Activated CD4-positive, alpha-beta T cell treated with anti-CD3 and anti-CD28 coated beads, Interleukin-2, amount 10 ng/mL, durations not matched to agents 24 days and 14 days (primary cell): ENCODE measurements at regions of chrX and their contacts with region 1.

Region 1: DNA sequence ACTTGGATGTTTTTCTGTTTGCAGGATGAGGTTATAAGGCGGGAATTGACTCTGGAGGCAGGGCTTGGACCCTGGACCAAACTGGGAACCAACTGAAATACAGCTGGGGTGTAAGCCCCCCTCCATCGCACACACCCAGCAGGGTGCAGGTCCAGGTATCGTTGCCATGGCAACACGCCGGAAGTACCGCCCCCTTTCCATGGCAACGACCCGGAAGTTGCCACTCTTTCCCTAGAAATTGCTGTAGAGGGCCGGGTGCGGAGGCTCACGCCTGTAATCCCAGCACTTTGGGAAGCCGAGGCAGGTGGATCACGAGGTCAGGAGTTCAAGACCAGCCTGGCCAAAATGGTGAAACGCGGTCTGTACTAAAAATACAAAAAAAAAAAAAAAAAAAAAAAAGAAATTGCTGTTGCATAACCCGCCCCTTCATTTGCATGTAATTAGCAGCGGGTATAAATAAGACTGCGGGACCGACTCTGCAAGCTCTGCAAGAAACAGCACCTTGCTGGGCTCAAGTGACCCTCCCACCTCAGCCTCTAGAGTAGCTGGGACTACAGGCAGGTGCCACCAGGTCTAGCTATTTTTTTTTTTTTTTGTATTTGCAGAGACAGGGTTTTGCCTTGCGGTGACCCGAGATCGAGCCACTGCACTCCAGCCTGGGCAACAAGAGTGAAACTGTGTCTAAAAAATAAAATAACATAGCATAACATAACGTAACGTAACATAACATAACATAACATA is 139.6 kb downstream of the CRLF2 start:
- DNase-seq: no peak
- H3K4me3 Mint-ChIP-seq: no peak overlapping the region
- H3K27ac Mint-ChIP-seq: no peak overlapping the region
- H3K4me1 Mint-ChIP-seq: peaks cover 6% of the 10 kb centered on the region
- H3K27me3 Mint-ChIP-seq: peaks cover 4% of the 10 kb centered on the region

Region 2: DNA sequence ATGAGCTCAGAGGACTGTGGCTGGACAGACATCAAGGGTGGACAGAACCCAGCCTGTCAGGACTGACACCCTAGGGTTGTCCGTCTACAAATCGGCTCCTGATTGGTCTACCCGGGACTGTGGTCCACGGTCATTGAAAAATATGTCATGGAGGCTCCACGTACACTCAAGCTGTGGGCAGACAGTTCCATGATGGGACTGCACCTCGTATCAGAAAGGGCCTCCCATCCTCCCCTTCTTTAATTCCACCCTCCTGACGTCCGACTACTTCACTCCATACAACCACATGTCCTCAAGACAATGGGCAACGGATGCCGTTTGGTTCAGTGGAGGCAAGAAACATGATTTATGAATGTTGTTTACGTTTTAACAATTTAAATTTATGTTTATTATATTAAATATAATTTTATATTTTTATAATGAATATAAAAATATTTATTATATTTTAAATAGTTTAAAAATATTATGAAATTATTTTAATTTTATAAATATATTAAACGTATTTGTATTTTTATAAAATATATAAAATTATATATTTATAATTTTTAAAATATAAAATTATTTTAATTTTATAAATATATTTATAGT is 500.2 kb before region 1 on chrX:
- intact Hi-C with region 1: loop called (anchors 5 kb)
- DNase-seq: no peak
- H3K4me3 Mint-ChIP-seq: no peak overlapping the region
- H3K27ac Mint-ChIP-seq: no peak overlapping the region
- H3K4me1 Mint-ChIP-seq: no peaks in the 10 kb centered on the region
- H3K27me3 Mint-ChIP-seq: no peaks in the 10 kb centered on the region

Region 3: DNA sequence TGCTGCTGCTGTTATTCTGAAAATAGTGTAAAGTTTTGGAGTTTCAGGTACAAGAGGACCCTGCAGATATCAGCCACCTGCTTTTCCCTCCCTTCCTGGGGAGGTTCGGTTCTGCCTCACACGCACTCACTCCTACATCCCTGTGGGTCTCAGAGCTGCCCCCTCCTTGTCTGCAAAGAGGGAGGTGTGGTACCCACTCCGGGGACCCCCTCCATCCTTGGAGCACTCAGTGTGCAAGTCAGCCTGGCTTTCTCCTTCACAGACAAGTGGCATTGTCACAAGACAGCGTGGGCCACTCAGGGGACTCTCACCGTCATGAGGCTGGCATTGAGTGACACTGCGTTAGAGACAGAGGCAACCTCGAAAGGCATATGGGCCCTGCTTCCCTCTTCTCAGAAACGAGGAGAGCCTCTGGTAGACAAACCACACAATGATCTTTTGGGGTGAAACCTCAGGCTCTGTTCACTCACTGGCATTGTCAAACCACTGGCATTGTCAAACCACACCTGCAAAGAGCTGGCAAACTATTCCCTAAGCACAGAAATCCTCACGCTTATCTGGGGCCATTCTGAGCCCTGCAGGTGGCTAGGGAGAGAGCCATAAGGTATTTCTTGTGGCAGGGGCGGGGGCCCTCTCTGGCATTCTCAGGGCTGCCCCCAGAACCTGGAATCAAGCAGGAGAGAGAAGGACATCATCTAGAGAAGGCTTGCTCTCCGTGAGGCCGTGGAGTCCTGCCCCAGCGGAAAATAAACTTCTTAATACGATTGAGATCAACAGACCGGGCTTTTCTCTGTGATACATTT is 157.2 kb before region 1 on chrX:
- intact Hi-C with region 1: loop called (anchors 10 kb)
- DNase-seq: peak; percentile 78
- H3K4me3 Mint-ChIP-seq: no peak overlapping the region
- H3K27ac Mint-ChIP-seq: no peak overlapping the region
- H3K4me1 Mint-ChIP-seq: no peaks in the 10 kb centered on the region
- H3K27me3 Mint-ChIP-seq: no peaks in the 10 kb centered on the region

Region 4: DNA sequence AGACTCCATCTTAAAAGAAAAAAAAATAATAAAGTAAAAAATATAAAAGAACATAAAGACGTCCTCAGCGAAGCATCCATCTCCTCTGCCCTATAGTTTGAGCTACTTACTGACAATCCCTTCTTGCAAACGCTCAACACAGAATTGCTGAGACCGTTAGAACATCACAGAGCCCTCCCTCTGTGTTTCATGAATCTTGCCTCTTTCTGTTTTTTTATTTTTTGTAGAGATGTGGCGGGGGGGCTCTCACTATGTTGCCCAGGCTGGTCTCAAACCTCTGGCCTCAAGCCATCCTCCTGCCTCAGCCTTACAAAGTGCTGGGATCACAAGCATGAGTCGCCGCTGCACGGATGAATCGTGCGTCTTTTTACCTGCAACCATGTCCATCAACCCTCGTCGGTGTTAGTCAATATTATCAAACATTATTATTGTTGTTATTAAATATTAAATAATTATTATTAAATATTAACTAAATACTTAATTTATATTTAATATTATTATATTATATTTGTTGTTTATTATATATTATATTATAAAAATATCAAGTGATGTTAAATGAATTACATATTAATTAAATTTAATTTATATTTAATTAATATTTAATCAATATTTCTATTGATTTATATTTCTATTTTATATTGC is 61.0 kb before region 1 on chrX:
- intact Hi-C with region 1: loop called (anchors 5 kb)
- DNase-seq: no peak
- H3K4me3 Mint-ChIP-seq: no peak overlapping the region
- H3K27ac Mint-ChIP-seq: no peak overlapping the region
- H3K4me1 Mint-ChIP-seq: no peaks in the 10 kb centered on the region
- H3K27me3 Mint-ChIP-seq: no peaks in the 10 kb centered on the region

Region 5: GRCh38 chrX:1178580-1179057 is 105.8 kb after region 1 on chrX:
- intact Hi-C with region 1: loop called (anchors 5 kb)
- DNase-seq: peak; percentile 71
- H3K4me3 Mint-ChIP-seq: no peak overlapping the region
- H3K27ac Mint-ChIP-seq: no peak overlapping the region
- H3K4me1 Mint-ChIP-seq: no peaks in the 10 kb centered on the region
- H3K27me3 Mint-ChIP-seq: no peaks in the 10 kb centered on the region